MCF 10A (cell line): ENCODE measurements at regions of chr3 and their contacts with region 1.

Region 1: DNA sequence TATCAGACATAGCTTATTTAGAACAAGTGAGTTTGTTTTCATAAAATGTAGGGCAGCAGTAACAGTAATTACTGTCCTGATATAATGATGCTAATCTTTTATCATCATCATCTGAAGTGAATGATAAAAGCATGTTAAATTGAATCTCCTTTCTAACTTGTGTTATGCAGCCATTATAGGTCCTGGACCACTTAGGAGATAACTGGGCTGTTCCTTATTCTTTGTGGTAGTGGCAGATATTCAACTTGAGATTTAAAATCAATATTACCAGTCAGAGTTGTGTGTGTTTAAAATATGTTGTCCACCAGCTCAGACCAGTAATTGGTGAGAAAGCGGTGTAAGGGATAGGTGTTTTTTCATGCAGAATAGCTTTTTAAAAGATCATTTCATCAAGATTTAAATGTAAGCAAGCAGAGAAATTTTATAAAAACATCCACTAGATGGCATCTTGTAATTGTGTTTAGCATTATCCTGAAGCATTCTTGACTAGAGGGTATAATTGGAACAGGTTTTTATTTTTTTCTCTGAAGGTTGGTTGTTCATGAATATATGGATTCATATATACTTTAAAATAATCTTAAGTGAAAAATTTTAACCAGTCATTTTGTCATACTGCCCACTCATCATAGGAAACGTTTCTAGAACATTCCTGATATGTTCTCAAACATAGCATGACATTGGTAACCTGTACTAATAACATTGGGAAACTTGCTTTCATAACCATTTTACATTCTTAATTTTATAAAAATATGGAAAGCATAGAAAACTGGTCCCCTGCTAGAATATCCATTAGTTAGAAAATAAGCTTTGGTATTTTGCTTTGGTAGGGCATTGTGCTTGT is 153.9 kb downstream of the BBX start:
- DNase-seq: no peak
- H3K4me3 Mint-ChIP-seq: no peak overlapping the region
- H3K27ac Mint-ChIP-seq: no peak overlapping the region
- H3K4me1 Mint-ChIP-seq: peaks cover 6% of the 10 kb centered on the region
- H3K27me3 Mint-ChIP-seq: no peaks in the 10 kb centered on the region
- CTCF ChIP-seq: peak; percentile 40

Region 2: GRCh38 chr3:107690522-107691138 is 13.9 kb after region 1 on chr3:
- CTCF ChIA-PET with region 1: interaction called, 75 read pairs
- POLR2A ChIA-PET with region 1: interaction called, 4 read pairs
- intact Hi-C with region 1: no loop called
- DNase-seq: peak; percentile 65
- H3K4me3 Mint-ChIP-seq: no peak overlapping the region
- H3K27ac Mint-ChIP-seq: peak overlapping the region; percentile 63
- H3K4me1 Mint-ChIP-seq: peaks cover 8% of the 10 kb centered on the region
- H3K27me3 Mint-ChIP-seq: no peaks in the 10 kb centered on the region
- CTCF ChIP-seq: peak; percentile 43

Region 3: DNA sequence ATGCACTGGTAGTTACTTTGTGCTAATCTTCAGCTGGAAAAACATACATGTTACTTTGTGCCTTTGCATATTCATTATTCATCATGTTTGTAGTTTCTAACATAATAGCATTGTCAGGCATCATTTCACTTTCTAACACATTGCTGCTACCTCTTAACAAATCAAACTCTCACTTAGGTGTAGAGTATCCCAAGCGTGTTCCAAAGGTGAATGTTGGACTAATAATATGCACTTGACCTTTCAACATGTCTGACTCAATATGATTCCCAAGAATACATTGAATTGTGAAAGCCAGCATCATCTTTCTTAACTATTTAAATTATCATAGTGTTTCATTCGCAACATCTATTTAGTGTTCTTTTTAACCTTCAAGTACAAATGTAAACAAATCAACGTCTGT is 57.6 kb after region 1 on chr3:
- CTCF ChIA-PET with region 1: interaction called, 98 read pairs
- POLR2A ChIA-PET with region 1: no interaction called
- intact Hi-C with region 1: no loop called
- DNase-seq: no peak
- H3K4me3 Mint-ChIP-seq: no peak overlapping the region
- H3K27ac Mint-ChIP-seq: no peak overlapping the region
- H3K4me1 Mint-ChIP-seq: no peaks in the 10 kb centered on the region
- H3K27me3 Mint-ChIP-seq: no peaks in the 10 kb centered on the region
- CTCF ChIP-seq: no peak

Region 4: DNA sequence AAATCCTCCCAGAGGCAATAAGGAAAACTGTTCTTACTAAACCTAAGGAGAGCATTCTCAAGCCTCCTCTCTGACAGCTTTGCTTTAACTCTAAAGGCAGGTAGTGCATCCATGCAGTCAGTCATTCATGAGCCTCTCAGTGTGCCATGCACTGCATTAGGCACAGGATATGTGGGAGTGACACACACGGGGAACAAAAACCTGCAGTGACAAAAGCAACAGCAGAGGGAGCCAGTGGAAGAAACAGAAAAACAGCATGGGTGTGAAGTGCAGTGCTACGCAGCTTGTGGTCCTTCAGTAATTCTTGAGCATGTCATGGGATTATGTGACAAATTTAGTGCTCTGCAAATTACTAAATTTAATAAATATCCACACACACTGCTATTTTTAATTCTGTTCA is 76.8 kb after region 1 on chr3:
- CTCF ChIA-PET with region 1: interaction called, 53 read pairs
- POLR2A ChIA-PET with region 1: no interaction called
- intact Hi-C with region 1: no loop called
- DNase-seq: peak; percentile 63
- H3K4me3 Mint-ChIP-seq: no peak overlapping the region
- H3K27ac Mint-ChIP-seq: no peak overlapping the region
- H3K4me1 Mint-ChIP-seq: peaks cover 6% of the 10 kb centered on the region
- H3K27me3 Mint-ChIP-seq: no peaks in the 10 kb centered on the region
- CTCF ChIP-seq: peak; percentile 40

Region 5: DNA sequence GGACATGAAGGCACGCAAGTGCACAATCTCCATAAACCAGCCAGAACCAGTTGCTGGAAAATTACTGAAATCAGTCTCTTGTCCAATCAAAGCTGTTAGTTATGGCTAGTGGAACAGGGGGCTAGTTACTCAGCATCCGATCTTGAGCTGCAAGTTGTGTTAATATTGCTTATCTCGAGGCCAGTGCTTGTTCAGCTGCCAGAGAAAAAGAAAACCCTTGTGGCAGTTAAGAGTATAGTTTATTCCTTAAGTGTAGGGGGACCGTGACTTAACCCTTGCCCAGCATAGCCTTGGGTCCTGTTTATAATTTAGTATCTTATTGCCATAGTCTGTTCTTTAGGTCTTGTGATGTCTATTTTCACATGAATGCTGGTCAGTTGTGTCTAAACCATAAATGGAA is 145.6 kb after region 1 on chr3:
- CTCF ChIA-PET with region 1: no interaction called
- POLR2A ChIA-PET with region 1: no interaction called
- intact Hi-C with region 1: no loop called
- DNase-seq: no peak
- H3K4me3 Mint-ChIP-seq: no peak overlapping the region
- H3K27ac Mint-ChIP-seq: no peak overlapping the region
- H3K4me1 Mint-ChIP-seq: no peaks in the 10 kb centered on the region
- H3K27me3 Mint-ChIP-seq: peaks cover 11% of the 10 kb centered on the region
- CTCF ChIP-seq: no peak

Region 6: DNA sequence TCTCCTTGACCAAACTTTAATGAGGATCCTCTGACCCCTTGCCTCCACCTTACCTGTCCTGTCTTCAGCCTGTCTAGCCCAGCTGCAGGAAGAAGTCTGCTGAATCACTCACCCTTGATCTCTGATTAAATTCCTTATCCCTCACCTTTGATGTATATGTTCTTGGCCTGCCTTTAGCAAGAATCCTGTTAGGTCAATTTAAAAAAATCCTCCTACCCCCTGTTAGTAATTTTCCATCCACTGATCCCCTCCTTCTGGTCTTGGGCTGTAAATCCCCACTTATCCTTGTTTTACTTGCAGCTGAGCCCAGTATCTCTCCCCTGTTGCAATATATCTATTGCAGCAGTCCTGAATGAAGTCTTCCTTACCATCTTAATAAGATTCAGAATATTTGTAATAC is 794.7 kb after region 1 on chr3:
- CTCF ChIA-PET with region 1: no interaction called
- POLR2A ChIA-PET with region 1: no interaction called
- intact Hi-C with region 1: no loop called
- DNase-seq: no peak
- H3K4me3 Mint-ChIP-seq: no peak overlapping the region
- H3K27ac Mint-ChIP-seq: peak overlapping the region; percentile 55
- H3K4me1 Mint-ChIP-seq: peaks cover 21% of the 10 kb centered on the region
- H3K27me3 Mint-ChIP-seq: no peaks in the 10 kb centered on the region
- CTCF ChIP-seq: no peak

Region 7: DNA sequence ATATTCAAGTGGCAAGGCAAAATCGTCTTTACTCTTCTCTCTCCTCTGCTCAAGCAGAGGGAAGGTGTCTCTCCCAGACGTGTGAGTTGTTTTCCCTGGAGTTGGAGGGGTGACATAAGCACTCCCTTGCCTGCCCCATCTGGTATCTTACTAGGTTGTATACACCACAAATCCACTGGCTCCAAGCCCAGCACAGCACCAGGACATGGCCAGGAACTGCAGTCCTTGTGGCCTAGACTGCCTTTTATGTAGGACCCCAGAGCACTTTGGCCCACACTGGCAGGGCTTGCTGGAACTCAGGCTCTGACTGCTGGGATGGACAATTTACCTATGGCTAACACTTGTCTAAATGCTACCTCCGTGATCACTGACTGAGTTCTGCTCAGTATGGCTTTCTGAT is 946.8 kb after region 1 on chr3:
- CTCF ChIA-PET with region 1: no interaction called
- POLR2A ChIA-PET with region 1: no interaction called
- intact Hi-C with region 1: no loop called
- DNase-seq: no peak
- H3K4me3 Mint-ChIP-seq: no peak overlapping the region
- H3K27ac Mint-ChIP-seq: no peak overlapping the region
- H3K4me1 Mint-ChIP-seq: no peaks in the 10 kb centered on the region
- H3K27me3 Mint-ChIP-seq: no peaks in the 10 kb centered on the region
- CTCF ChIP-seq: no peak